ENCODE measurements at regions of chr9 and their contacts with region 1.

Region 1: GRCh38 chr9:120730661-120731514 is 16.6 kb upstream of the MEGF9 start:
- DNase-seq: peak; percentile 92 to 100
- H3K4me3 ChIP-seq: no peak overlapping the region; the same call in 1 of the 2 replicates
- H3K27ac ChIP-seq: peak overlapping the region; percentile 87
- H3K4me1 ChIP-seq: peaks cover 73% of the 10 kb centered on the region
- H3K27me3 ChIP-seq: no peaks in the 10 kb centered on the region
- CTCF ChIP-seq: no peak

Region 2: GRCh38 chr9:120579750-120580590 is 150.9 kb before region 1 on chr9 and contains the start of gene CDK5RAP2:
- CTCF ChIA-PET with region 1: no interaction called
- POLR2A ChIA-PET with region 1: no interaction called
- intact Hi-C with region 1: loop called (anchors 2 kb)
- DNase-seq: peak; percentile 91 to 95
- H3K4me3 ChIP-seq: peak within 1 kb of the TSS; percentile 79
- H3K27ac ChIP-seq: no peak within 1 kb of the TSS
- H3K4me1 ChIP-seq: peaks cover 13% of the 10 kb centered on the region
- H3K27me3 ChIP-seq: no peaks in the 10 kb centered on the region
- CTCF ChIP-seq: no peak
- total RNA-seq, gene CDK5RAP2: 113 and 138 TPM in 2 replicates

Region 3: GRCh38 chr9:120619751-120620655 is 110.9 kb before region 1 on chr9:
- CTCF ChIA-PET with region 1: interaction called, 9 read pairs
- POLR2A ChIA-PET with region 1: no interaction called
- intact Hi-C with region 1: loop called (anchors 5 kb)
- DNase-seq: peak; percentile 49
- H3K4me3 ChIP-seq: no peak overlapping the region
- H3K27ac ChIP-seq: peak overlapping the region; percentile 41
- H3K4me1 ChIP-seq: peaks cover 20% of the 10 kb centered on the region
- H3K27me3 ChIP-seq: no peaks in the 10 kb centered on the region
- CTCF ChIP-seq: peak; percentile 89

Region 4: DNA sequence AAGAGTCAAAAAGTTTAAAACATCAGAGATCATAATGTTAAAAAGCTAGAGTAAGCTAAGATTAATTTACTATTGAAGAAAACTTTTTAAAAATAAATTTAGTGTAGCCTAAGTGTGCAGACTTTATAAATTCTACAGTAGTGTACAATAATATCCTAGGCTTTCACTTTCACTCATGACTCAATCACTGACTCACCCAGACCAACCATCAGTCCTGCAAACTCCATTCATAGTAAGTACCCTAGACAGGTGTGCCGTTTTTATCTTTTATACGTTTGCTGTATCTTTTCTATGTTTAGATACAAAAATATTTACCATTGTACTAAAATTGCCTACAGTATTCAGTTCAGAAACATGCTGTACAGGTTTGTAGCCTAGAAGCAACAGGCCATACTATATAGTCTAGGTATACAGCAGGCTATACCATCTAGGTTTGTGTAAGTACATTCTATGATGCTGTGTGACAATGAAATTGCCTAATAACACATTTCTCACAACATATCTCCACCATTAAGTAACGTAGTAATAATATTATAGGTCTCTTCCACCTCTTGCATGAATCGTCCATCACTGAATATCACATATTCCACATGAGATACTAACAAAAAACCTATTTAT is 75.8 kb before region 1 on chr9:
- CTCF ChIA-PET with region 1: interaction called, 11 read pairs
- POLR2A ChIA-PET with region 1: no interaction called
- intact Hi-C with region 1: no loop called
- DNase-seq: peak; percentile 6 to 55
- H3K4me3 ChIP-seq: no peak overlapping the region
- H3K27ac ChIP-seq: 0 out of 2 replicates have a peak overlapping the region, but pooled peaks have one; percentile 0
- H3K4me1 ChIP-seq: peaks cover 17% of the 10 kb centered on the region
- H3K27me3 ChIP-seq: no peaks in the 10 kb centered on the region
- CTCF ChIP-seq: no peak

Region 5: GRCh38 chr9:120689860-120690259 is 41.0 kb before region 1 on chr9:
- CTCF ChIA-PET with region 1: no interaction called
- POLR2A ChIA-PET with region 1: interaction called, 3 read pairs
- intact Hi-C with region 1: loop called (anchors 2 kb)
- DNase-seq: no peak
- H3K4me3 ChIP-seq: no peak overlapping the region
- H3K27ac ChIP-seq: peak overlapping the region; percentile 10; the same call in 1 of the 2 replicates
- H3K4me1 ChIP-seq: peaks cover 16% of the 10 kb centered on the region
- H3K27me3 ChIP-seq: no peaks in the 10 kb centered on the region
- CTCF ChIP-seq: no peak

Region 6: GRCh38 chr9:120842690-120843499 is 112.0 kb after region 1 on chr9 and contains the start of gene PSMD5:
- CTCF ChIA-PET with region 1: no interaction called
- POLR2A ChIA-PET with region 1: no interaction called
- intact Hi-C with region 1: no loop called
- DNase-seq: peak; percentile 99
- H3K4me3 ChIP-seq: peak within 1 kb of the TSS; percentile 81
- H3K27ac ChIP-seq: peak within 1 kb of the TSS; percentile 81
- H3K4me1 ChIP-seq: peaks cover 19% of the 10 kb centered on the region
- H3K27me3 ChIP-seq: no peaks in the 10 kb centered on the region
- CTCF ChIP-seq: no peak
- total RNA-seq, gene PSMD5: 86.4 and 96.2 TPM in 2 replicates

Measured in PC-9 (cell line).